ENCODE measurements at regions of chr17 and their contacts with region 1.

Region 1: GRCh38 chr17:31696184-31696602 is 162.9 kb downstream of the COPRS start:
- DNase-seq: peak; percentile 91 to 92
- ATAC-seq: peak; percentile 89
- H3K4me3 ChIP-seq: no peak overlapping the region
- H3K27ac ChIP-seq: peak overlapping the region in 1 of 2 donors; percentile 66
- H3K4me1 ChIP-seq: no peaks in the 10 kb centered on the region
- H3K27me3 ChIP-seq: no peaks in the 10 kb centered on the region

Region 2: DNA sequence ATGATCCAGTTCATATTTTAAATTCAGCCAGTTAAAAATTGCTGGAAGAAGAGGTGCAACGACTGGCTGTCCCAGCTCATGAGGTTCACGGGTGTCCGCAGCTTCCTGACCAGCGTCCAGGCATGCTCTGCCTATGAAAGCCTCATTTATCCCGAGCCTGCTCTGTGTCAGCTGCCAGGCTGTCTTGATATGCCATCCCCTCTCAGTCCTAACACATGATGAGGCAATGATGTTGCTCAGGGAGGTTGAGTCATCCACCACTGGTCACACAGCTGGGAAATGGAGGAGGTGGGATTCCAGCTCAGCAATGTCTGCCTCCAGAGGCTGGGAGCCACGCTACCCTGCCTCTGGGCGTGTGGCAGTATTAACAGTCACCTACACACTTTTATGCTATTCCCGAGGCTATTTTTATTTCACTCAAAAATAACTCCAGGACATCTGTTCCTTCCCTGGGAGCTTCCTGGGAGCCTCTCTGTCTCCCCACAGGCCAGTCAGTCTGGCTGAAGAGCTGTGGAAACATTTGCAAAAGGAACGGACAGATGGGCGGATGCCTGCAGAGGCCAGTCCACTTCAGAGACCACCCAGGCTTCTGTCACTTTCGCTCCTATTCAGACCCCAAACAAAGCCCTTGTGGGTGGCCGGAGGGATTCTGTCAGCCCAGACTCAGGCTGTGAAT is 282.2 kb before region 1 on chr17:
- intact Hi-C with region 1: no loop called
- DNase-seq: peak; percentile 24 to 37
- ATAC-seq: no peak
- H3K4me3 ChIP-seq: no peak overlapping the region
- H3K27ac ChIP-seq: no peak overlapping the region
- H3K4me1 ChIP-seq: no peaks in the 10 kb centered on the region
- H3K27me3 ChIP-seq: no peaks in the 10 kb centered on the region

Region 3: GRCh38 chr17:31558748-31559644 is 137.2 kb before region 1 on chr17:
- intact Hi-C with region 1: loop called in 1 of 2 experiments (anchors 2 kb)
- DNase-seq: peak; percentile 89 to 94
- ATAC-seq: peak; percentile 92
- H3K4me3 ChIP-seq: peak overlapping the region; percentile 74 to 97
- H3K27ac ChIP-seq: peak overlapping the region; percentile 79 to 96
- H3K4me1 ChIP-seq: peaks cover 0 to 3% of the 10 kb centered on the region in 2 donors
- H3K27me3 ChIP-seq: no peaks in the 10 kb centered on the region

Region 4: DNA sequence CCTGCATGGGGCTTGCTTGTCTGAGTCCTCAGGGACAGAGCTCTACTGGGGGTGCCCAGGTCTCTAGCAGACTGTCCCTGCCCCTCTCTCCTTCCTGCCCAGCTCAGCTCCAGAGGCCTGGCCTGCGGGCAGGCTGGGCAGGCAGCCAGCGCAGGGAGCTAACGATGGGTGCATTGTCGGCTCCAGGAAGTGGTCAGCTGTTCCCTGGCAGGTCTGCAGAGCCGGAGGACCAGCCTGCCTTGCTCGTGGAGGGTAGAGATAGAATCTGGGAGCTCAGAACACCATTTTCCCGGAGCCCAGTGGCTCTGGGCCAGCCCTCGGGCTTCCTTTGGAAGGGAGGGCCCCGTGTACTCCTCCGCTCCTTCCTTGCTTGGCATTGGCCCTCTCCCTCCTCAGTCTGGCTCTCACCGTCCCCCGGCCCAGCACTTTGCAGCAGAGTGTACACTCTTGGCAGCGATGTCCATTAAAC is 115.1 kb before region 1 on chr17:
- intact Hi-C with region 1: loop called in 1 of 2 experiments (anchors 5 kb)
- DNase-seq: peak; percentile 90 to 92
- ATAC-seq: peak; percentile 86
- H3K4me3 ChIP-seq: no peak overlapping the region
- H3K27ac ChIP-seq: peak overlapping the region; percentile 50 to 79
- H3K4me1 ChIP-seq: peaks cover 0 to 4% of the 10 kb centered on the region in 2 donors
- H3K27me3 ChIP-seq: no peaks in the 10 kb centered on the region

Region 5: DNA sequence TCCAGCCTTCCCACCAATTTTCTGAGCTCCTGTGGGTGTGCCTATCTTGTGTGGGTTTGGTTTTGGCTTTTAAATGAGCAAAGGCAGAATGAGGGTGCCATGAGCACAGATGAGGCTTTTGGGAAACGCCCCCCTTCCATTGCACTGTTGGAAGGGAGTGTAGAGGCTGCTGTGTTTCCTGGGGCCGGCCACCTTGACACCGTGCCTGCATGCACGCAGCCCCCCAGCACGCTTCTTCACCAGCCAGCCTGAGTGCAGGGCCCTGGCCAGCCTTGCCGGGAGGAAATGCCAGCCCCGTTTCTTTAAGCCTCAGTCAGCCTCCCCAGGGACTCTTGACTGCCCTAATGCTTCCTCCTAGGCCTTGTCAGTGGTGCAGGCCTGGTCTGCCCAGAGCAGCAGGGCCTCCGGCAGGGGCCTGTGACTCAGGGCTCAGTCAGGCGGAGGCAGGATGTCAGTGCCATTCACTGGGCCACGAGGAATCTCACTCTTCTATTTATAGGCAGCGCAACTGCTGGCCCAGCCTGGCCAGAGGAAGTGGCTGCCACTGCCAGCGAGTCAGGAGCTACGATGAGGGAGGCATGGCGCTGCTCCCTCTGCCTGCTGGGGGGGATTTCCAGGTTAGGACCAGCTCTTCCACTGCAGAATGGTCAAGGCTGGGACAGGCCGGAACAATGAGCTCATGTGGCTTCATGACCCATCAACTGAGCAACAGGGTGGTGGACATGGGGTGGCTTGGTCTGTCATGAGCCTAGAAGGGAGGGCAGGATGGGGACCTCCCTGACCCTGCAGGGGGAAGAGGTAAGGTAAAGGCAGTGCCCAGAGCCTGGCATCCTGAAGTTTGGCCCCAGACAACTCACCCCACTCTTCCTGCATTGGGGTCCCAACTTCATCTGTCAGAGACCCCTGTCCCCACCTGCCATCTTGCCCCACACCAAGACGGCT is 99.5 kb before region 1 on chr17:
- intact Hi-C with region 1: loop called in 1 of 2 experiments (anchors 5 kb)
- DNase-seq: peak; percentile 94 to 97
- ATAC-seq: peak; percentile 94
- H3K4me3 ChIP-seq: no peak overlapping the region
- H3K27ac ChIP-seq: peak overlapping the region; percentile 70 to 91
- H3K4me1 ChIP-seq: peaks cover 0 to 11% of the 10 kb centered on the region in 2 donors
- H3K27me3 ChIP-seq: no peaks in the 10 kb centered on the region

Region 6: GRCh38 chr17:31645351-31645750 is 50.8 kb before region 1 on chr17:
- intact Hi-C with region 1: no loop called
- DNase-seq: no peak
- ATAC-seq: no peak
- H3K4me3 ChIP-seq: no peak overlapping the region
- H3K27ac ChIP-seq: no peak overlapping the region
- H3K4me1 ChIP-seq: no peaks in the 10 kb centered on the region
- H3K27me3 ChIP-seq: no peaks in the 10 kb centered on the region

Region 7: GRCh38 chr17:31740611-31741082 is 44.5 kb after region 1 on chr17:
- intact Hi-C with region 1: loop called in 1 of 2 experiments (anchors 5 kb)
- DNase-seq: no peak
- ATAC-seq: no peak
- H3K4me3 ChIP-seq: no peak overlapping the region
- H3K27ac ChIP-seq: peak overlapping the region in 1 of 2 donors; percentile 58
- H3K4me1 ChIP-seq: peaks cover 2 to 8% of the 10 kb centered on the region in 2 donors
- H3K27me3 ChIP-seq: no peaks in the 10 kb centered on the region

Region 8: GRCh38 chr17:31842183-31843069 is 146.2 kb after region 1 on chr17:
- intact Hi-C with region 1: loop called (anchors 10 kb)
- DNase-seq: peak; percentile 75 to 82
- ATAC-seq: peak; percentile 94
- H3K4me3 ChIP-seq: no peak overlapping the region
- H3K27ac ChIP-seq: peak overlapping the region in 1 of 2 donors; percentile 91
- H3K4me1 ChIP-seq: peaks cover 0 to 7% of the 10 kb centered on the region in 2 donors
- H3K27me3 ChIP-seq: no peaks in the 10 kb centered on the region

Region 9: DNA sequence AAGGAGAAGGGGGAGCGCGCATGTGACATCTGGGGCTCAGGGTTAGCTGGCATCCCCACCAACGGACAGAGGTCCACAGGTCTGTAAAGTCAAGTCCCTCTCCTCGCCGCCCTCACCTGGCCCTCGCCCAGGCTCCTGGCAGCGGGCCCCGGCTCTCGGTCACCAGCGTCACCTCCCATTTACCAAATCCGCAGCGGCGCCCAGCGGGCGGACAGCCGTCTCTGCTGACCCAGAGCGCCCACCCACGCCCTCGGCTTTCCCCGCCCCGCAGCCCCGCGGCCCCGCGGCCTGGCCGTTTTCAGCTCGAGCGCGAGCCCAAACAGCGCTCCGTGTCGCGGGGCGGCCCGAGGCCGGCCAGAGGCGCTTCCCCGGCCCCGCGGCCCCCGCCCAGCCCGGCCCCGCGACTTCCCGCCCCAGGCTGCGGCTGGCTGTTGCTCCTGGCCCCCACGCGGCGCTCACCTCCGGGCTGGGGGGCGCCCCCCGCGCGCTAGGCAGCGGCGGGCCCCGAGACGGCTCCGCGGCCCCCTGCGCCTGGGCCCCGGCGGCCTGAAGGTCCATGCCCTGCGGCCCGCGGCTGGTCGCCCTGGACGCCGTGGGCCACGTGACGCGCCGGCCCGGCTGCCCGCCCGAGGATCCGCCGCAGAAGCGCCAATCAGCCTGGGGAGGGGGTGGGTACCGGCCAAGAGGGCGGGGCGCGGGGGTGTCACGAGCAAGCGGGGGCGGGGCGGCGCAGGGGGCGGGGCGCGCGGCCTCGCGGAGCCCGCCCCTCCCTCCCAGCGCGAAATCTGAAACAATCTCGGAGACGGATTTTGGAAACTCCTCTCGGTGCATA is 162.7 kb after region 1 on chr17 and contains the start of gene COPRS:
- intact Hi-C with region 1: no loop called
- DNase-seq: peak; percentile 92 to 95
- ATAC-seq: peak; percentile 91
- H3K4me3 ChIP-seq: peak within 1 kb of the TSS; percentile 88 to 100
- H3K27ac ChIP-seq: peak within 1 kb of the TSS; percentile 70 to 83
- H3K4me1 ChIP-seq: peaks cover 2 to 9% of the 10 kb centered on the region in 2 donors
- H3K27me3 ChIP-seq: no peaks in the 10 kb centered on the region
- total RNA-seq, gene COPRS: 56.9 to 69.2 TPM

Measured in aorta (tissue), 5 donors.